Aorta (tissue), 5 donors: ENCODE measurements at regions of chr22 and their contacts with region 1.

Region 1: GRCh38 chr22:35510481-35510934 is 30.1 kb upstream of the RASD2 start:
- DNase-seq: no peak
- ATAC-seq: no peak
- H3K4me3 ChIP-seq: no peak overlapping the region
- H3K27ac ChIP-seq: no peak overlapping the region
- H3K4me1 ChIP-seq: no peaks in the 10 kb centered on the region
- H3K27me3 ChIP-seq: no peaks in the 10 kb centered on the region

Region 2: GRCh38 chr22:35454416-35455054 is 56.0 kb before region 1 on chr22:
- intact Hi-C with region 1: loop called in 1 of 2 experiments (anchors 10 kb)
- DNase-seq: no peak
- ATAC-seq: no peak
- H3K4me3 ChIP-seq: no peak overlapping the region
- H3K27ac ChIP-seq: no peak overlapping the region
- H3K4me1 ChIP-seq: no peaks in the 10 kb centered on the region
- H3K27me3 ChIP-seq: no peaks in the 10 kb centered on the region

Region 3: GRCh38 chr22:35568751-35569725 is 58.5 kb after region 1 on chr22:
- intact Hi-C with region 1: loop called in 1 of 2 experiments (anchors 5 kb)
- DNase-seq: no peak
- ATAC-seq: no peak
- H3K4me3 ChIP-seq: no peak overlapping the region
- H3K27ac ChIP-seq: no peak overlapping the region
- H3K4me1 ChIP-seq: no peaks in the 10 kb centered on the region
- H3K27me3 ChIP-seq: no peaks in the 10 kb centered on the region

Region 4: GRCh38 chr22:35705141-35705540 is 194.6 kb after region 1 on chr22:
- intact Hi-C with region 1: no loop called
- DNase-seq: no peak
- ATAC-seq: no peak
- H3K4me3 ChIP-seq: no peak overlapping the region
- H3K27ac ChIP-seq: no peak overlapping the region
- H3K4me1 ChIP-seq: no peaks in the 10 kb centered on the region
- H3K27me3 ChIP-seq: no peaks in the 10 kb centered on the region